ENCODE measurements at regions of chr3 and their contacts with region 1.

Region 1: DNA sequence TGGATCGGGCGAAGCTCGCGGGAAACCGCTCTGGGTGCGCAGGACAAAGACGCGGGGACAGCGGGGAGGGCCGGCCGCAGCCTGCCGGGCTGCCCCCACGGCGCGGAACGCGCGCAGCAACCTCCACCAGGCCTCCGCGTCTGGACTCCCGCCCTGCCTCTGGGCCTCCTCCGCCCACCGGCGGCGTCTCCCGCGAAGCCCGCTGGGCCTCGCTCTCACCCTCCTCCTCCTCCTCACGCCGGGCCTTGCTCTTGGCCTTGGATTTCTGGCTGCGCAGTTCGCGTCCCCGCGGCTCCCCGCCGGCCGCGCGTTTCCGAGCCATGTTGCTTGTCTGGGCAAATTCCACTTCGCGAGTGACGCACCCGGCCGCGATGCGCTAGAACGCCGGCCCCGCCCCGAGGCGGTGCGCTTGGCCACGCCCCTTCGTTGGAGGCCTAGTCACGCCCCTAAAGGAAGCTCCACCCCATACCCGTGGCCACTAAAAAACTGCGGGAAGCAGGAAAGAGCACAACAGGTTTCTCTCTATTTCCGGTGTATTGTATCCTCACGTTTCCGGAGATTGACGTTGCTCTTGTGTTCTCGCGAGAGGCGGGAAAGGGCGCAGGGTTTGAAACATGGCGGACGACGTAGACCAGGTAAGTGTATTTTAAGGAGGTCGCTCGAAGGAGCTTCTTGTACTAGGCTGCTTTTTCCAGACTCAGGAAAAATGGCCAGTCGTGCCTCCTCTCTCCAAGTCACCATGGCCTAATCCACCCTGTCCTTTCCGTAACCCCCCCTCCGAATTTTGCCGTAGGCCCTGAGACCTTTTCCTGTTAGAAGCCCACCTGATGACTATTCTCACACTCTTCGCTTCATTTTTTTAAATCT is at the starts of genes LSM3 and XPC:
- DNase-seq: peak; percentile 100
- H3K4me3 Mint-ChIP-seq: peak within 1 kb of the TSS; percentile 87
- H3K27ac Mint-ChIP-seq: peak within 1 kb of the TSS; percentile 99
- H3K4me1 Mint-ChIP-seq: peaks cover 62% of the 10 kb centered on the region
- H3K27me3 Mint-ChIP-seq: no peaks in the 10 kb centered on the region
- total RNA-seq, gene LSM3: 17.4 and 18.0 TPM in 2 replicates
- total RNA-seq, gene XPC: 29.7 and 32.3 TPM in 2 replicates

Region 2: DNA sequence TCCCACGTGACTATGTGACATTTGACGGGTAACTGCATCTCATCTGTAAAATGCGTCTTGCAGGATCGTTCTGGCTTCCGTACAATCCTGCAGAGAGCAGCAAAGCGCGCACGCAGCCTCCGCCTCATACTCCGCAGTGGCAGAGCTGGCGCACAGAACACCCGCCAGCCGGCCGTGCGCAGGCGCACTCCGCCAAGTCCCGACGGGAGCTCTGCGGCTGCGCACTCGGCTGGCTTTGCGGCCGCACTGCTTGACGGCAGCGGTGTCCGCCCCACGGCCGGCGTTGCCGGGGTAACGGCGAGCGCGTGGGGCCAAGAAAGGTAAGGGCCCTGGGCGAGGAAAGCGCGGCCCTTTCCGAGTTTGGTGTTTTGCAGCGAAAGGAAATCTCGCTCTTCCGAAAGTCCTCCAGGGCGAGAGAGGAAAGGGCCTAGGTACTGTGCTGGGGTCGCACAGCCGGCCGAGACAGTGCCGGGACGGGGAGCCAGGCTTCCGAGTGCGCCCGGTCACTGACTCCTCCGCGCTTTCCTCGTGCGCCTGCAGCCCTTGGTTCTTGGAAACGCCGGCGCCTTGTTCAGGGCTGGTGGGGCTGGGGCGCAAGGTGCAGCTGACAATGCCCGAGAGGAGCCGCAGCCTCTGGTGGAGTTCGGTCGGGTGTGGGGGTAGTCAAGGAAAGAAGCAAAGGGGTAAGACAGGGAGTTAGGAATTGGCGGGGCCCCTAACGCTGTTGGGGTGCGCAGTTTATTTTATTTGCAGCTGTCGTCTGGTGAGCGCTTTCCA is 1694.1 kb before region 1 on chr3 and contains the start of gene TSEN2:
- intact Hi-C with region 1: loop called (anchors 10 kb)
- DNase-seq: peak; percentile 99
- H3K4me3 Mint-ChIP-seq: peak within 1 kb of the TSS; percentile 94
- H3K27ac Mint-ChIP-seq: peak within 1 kb of the TSS; percentile 97
- H3K4me1 Mint-ChIP-seq: peaks cover 25% of the 10 kb centered on the region
- H3K27me3 Mint-ChIP-seq: no peaks in the 10 kb centered on the region
- total RNA-seq, gene TSEN2: 30.5 and 39.3 TPM in 2 replicates

Region 3: DNA sequence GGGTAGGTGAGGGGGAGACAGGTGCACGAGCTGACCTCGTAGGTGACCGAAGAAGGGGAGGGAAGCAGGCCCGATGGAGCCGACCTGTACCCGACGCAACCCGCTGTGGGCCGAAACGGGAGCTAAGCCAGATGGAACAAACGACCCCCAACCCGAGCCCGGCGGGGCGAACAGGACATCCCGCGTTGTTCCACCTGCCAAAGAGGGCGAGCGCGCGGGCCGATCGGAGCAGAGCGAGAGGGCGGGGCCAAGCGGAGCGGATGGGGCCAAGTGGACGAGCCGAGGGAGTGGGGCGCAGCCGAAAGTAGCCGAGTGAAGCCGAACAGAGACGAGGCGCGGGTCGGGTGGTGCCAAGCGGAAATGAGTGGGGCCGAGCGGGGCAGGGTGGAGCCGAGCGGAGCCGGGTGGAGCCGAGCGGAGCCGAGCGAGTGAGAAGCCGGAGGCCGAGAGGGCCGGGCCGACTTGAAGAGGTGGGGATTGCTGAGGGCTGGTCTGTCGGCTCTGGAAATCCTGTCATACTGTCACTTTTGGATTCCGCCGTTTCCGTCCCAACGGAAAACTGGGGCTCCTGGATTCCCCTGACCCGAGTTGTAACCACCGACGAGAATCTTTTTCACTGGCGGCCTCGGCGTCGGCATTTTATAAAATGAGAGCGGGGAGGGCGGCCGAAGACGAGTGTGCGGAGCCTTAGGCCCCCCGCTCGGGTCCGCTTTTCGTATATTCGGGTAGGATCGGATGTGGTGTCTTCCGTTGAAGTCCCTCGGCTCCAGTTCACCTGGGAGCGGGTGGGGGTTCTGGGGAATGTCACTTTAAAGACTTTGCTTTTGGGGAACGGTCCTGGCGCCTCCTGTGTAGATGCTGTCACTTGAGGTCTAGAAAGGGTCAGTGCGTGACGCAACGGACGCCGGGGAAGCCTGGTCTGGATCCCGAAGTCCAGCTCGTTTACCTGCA is 283.1 kb before region 1 on chr3:
- intact Hi-C with region 1: loop called (anchors 1 kb)
- DNase-seq: peak; percentile 99
- H3K4me3 Mint-ChIP-seq: peak overlapping the region; percentile 90
- H3K27ac Mint-ChIP-seq: peak overlapping the region; percentile 76
- H3K4me1 Mint-ChIP-seq: peaks cover 23% of the 10 kb centered on the region
- H3K27me3 Mint-ChIP-seq: peaks cover 2% of the 10 kb centered on the region

Region 4: DNA sequence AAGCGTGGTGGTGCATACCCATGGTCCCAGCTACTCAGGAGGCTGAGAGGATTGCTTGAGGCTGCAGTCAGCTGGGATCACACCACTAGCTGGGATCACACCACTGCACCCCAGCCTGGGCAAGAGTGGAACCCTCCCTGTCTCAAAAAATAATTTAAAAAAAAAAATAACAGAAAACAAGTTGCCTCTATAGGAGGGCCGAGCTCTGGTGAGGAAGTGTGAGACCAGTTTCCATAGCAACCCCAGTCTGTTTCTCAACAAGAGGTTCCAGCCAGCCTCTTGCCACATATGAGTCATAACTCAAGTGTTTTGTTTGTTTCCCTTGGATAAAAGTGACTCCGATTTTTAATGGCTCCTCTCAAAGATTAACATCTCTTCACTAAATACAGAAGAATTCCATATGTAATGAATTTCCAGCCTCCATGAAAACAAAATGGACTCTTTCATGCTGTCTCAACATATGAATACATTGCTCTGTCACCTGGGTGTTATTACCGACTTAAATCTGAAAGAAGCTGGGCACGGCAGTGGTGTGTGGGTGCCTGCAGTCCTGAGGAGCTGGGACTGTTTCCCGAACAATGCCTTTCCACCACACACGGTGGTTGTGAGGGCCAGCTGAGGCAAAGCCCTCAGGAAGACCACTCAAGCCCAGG is 33.9 kb before region 1 on chr3:
- intact Hi-C with region 1: loop called (anchors 1 kb)
- DNase-seq: peak; percentile 93
- H3K4me3 Mint-ChIP-seq: peak overlapping the region; percentile 78
- H3K27ac Mint-ChIP-seq: peak overlapping the region; percentile 94
- H3K4me1 Mint-ChIP-seq: peaks cover 30% of the 10 kb centered on the region
- H3K27me3 Mint-ChIP-seq: no peaks in the 10 kb centered on the region

Region 5: DNA sequence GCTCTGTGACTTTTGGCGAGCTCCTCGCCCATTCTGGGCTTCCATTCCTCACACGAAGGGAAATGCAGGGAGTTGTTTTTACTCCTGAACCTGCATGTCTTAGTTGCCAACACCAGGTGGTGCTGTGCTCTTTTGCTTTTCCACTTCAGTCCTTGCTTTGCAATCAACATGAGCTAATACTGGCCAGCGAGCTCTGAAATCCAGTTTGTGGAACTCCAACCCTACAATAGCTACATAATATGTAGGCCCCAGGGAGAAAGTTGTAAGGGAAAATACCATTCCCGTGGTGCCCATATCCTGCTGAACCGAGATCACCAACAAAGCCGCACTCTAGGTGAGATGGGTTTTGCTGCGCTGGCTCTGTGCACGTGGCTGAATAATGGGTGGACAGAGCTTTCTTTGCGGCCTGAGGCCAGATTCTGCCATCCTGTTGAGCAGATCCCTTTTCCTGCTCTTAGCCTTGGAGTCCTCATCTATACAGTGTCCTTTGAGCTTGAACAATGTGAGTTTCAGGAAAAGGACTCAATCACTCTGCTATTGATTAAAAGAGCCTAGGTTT is 25.1 kb after region 1 on chr3:
- intact Hi-C with region 1: no loop called
- DNase-seq: peak; percentile 78
- H3K4me3 Mint-ChIP-seq: no peak overlapping the region
- H3K27ac Mint-ChIP-seq: no peak overlapping the region
- H3K4me1 Mint-ChIP-seq: peaks cover 3% of the 10 kb centered on the region
- H3K27me3 Mint-ChIP-seq: no peaks in the 10 kb centered on the region

Region 6: GRCh38 chr3:14431892-14432834 is 253.7 kb after region 1 on chr3:
- intact Hi-C with region 1: loop called (anchors 2 kb)
- DNase-seq: peak; percentile 98
- H3K4me3 Mint-ChIP-seq: peak overlapping the region; percentile 80
- H3K27ac Mint-ChIP-seq: peak overlapping the region; percentile 97
- H3K4me1 Mint-ChIP-seq: peaks cover 73% of the 10 kb centered on the region
- H3K27me3 Mint-ChIP-seq: no peaks in the 10 kb centered on the region

Region 7: GRCh38 chr3:14480207-14481025 is 301.9 kb after region 1 on chr3:
- intact Hi-C with region 1: no loop called
- DNase-seq: no peak
- H3K4me3 Mint-ChIP-seq: no peak overlapping the region
- H3K27ac Mint-ChIP-seq: no peak overlapping the region
- H3K4me1 Mint-ChIP-seq: peaks cover 4% of the 10 kb centered on the region
- H3K27me3 Mint-ChIP-seq: no peaks in the 10 kb centered on the region

Region 8: DNA sequence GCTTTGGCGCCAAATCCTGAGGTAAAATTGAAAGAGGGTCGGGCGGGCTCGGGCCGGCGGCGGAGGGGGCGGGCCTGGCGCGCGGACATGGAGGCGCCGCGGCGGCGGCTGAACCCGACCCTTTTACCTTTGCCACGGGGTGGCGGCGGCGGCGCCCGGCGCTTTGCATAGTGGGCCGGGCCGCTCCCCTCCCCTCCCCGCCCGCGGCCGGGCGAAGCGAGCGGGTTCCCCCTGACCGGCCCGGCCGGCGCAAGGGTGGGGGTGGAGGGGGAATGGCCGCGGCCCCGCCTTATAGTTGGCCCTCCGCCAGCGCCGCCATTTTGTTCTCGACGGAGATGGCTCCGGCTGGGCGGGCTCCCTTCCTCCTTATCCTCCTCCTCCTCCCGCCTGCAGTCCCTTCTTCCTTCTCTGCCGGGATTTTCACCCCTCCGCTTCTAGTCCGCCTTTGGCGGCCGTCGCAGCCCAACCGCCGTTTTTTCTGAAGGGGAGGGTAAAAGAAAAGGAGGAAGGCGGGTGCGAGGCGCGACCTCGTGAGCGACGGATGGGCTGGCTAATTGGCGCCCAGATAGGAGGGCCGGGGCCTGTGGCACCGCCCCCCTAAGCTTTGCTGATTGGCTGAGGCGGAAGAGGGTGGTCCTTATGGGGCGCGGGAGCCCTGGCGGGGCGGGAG is 769.5 kb after region 1 on chr3:
- intact Hi-C with region 1: loop called (anchors 1 kb)
- DNase-seq: peak; percentile 99
- H3K4me3 Mint-ChIP-seq: peak overlapping the region; percentile 100
- H3K27ac Mint-ChIP-seq: peak overlapping the region; percentile 100
- H3K4me1 Mint-ChIP-seq: peaks cover 32% of the 10 kb centered on the region
- H3K27me3 Mint-ChIP-seq: no peaks in the 10 kb centered on the region

Measured in activated CD4-positive, alpha-beta T cell treated with anti-CD3 and anti-CD28 coated beads, Interleukin-2, amount 10 ng/mL, durations not matched to agents 24 days and 14 days (primary cell).